CD4-positive, alpha-beta T cell (primary cell): ENCODE measurements at regions of chr3 and their contacts with region 1.

Region 1: DNA sequence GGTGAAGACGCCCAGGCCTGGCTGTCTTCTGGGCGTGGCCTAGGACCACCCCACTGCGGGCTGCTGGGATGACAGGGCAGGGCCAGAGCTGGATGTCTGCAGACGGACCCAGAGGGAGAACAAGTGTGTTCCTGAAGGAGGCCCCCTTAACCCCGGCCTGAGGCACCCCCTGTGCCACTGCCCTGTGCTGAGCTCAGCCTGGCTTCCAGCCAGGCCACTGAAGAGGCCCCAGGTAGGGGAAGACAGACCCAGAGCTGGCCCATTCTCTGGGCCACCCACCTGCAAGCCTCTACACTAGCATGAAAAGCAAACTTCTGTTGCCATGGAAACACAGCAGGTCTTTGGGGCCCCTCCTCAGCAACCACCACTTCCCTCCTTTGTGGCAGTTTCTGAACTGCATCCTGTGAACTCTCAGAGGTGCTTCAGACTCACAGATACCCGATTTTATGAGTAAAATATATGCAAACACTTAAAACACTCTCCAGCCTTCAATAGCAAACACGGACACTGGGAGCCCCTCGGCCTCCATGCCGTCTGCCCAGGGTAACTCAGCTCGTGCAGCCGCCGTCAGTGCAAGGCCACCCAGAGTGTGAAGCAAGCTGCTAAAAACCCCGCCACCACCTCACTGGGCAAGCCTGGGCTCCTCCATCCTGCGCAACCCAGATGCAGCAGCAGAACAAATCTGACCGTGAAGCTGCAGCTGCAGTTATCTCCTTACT is 42.5 kb downstream of the CMTM6 start:
- DNase-seq: peak; percentile 58 to 97 (median 73)
- ATAC-seq: peak; percentile 73
- H3K4me3 ChIP-seq: peak overlapping the region; percentile 39
- H3K4me3 Mint-ChIP-seq: peak overlapping the region; percentile 76
- H3K27ac ChIP-seq: peak overlapping the region; percentile 90 to 97
- H3K27ac Mint-ChIP-seq: no peak overlapping the region
- H3K4me1 ChIP-seq: peaks cover 83% of the 10 kb centered on the region
- H3K4me1 Mint-ChIP-seq: peaks cover 33% of the 10 kb centered on the region
- H3K27me3 ChIP-seq: no peaks in the 10 kb centered on the region
- H3K27me3 Mint-ChIP-seq: no peaks in the 10 kb centered on the region
- CTCF ChIP-seq: no peak

Region 2: DNA sequence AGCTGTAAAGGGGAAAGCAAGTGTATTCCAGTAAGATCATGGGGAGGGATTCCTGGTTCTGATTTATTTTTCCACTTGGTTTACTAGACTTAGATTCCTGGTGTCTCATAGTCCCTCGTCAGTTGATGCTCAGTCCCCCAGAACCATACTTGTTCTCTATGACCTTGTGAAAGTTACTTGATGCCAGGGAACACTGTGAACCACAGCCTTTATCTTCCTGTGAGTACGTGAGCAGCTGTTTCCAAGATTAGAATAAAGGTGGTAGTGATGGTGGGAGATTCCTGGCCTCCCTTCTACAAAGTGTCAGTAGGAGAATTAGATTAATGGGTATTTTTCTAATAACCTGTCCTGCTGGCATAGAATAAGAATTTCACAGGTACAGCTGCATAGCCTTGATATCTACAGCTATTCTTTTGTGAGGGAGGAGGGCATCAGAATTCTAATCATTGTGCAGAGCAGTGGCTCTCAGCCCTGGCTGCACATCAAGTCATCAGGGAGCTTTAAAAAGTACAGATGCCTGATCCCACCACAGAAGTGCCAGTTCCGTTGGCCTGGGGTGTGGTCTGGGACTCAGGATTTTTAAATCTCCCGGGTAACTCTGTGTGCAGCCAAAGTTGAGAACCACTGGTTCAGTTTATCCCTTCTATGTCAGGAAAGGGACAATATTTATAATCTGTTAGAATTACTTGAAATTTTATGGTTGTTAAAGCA is 333.7 kb before region 1 on chr3:
- CTCF ChIA-PET with region 1: no interaction called
- POLR2A ChIA-PET with region 1: no interaction called
- intact Hi-C with region 1: no loop called
- DNase-seq: no peak
- ATAC-seq: no peak
- H3K4me3 ChIP-seq: no peak overlapping the region
- H3K4me3 Mint-ChIP-seq: no peak overlapping the region
- H3K27ac ChIP-seq: no peak overlapping the region
- H3K27ac Mint-ChIP-seq: no peak overlapping the region
- H3K4me1 ChIP-seq: no peaks in the 10 kb centered on the region
- H3K4me1 Mint-ChIP-seq: peaks cover 21% of the 10 kb centered on the region
- H3K27me3 ChIP-seq: no peaks in the 10 kb centered on the region
- H3K27me3 Mint-ChIP-seq: no peaks in the 10 kb centered on the region
- CTCF ChIP-seq: no peak

Region 3: DNA sequence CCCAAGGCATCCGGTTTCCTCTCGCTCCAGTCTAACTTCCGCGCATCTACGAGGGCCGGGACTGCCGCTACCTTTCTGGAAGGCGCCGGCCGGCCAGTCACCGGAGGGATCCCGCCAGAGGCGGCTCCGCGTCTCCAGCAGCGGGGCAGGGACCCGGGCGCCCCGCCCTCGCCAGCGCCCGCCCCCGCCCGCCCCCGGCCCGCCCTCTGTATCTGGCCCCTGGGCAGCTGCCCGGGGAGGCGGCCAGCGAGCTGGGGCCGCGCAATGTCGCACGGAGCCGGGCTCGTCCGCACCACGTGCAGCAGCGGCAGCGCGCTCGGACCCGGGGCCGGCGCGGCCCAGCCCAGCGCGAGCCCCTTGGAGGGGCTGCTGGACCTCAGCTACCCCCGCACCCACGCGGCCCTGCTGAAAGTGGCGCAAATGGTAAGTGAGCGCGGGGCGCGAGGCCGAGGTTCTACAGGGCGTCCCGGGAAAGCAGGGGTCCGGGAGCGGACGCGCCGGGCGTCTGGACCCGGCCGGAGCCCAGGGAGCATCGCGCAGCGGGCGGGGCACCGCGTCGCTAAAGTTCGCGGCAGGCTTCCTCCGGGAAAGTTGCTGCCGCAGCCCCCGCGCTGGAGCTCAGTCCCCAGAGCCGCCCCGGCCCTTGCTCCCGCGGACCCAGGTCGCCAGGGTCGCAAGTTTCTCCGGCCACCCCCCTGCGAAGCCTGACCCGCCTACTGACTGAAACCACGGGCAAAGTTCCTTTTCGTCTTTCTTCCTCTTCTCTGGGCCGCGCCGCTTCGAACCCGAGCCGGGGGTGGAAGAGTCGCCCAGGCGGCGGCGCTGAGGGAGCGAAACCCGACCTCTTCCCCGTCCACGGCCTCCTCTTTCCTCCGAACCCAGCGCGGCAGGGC is 68.3 kb before region 1 on chr3 and contains the start of gene CMTM7:
- CTCF ChIA-PET with region 1: no interaction called
- POLR2A ChIA-PET with region 1: interaction called, 16 read pairs
- intact Hi-C with region 1: loop called in 1 of 2 experiments (anchors 2 kb)
- DNase-seq: peak; percentile 32 to 81 (median 52)
- ATAC-seq: peak; percentile 54
- H3K4me3 ChIP-seq: peak within 1 kb of the TSS; percentile 92
- H3K4me3 Mint-ChIP-seq: peak within 1 kb of the TSS; percentile 97
- H3K27ac ChIP-seq: peak within 1 kb of the TSS; percentile 77 to 79
- H3K27ac Mint-ChIP-seq: peak within 1 kb of the TSS; percentile 91
- H3K4me1 ChIP-seq: peaks cover 47% of the 10 kb centered on the region
- H3K4me1 Mint-ChIP-seq: peaks cover 61% of the 10 kb centered on the region
- H3K27me3 ChIP-seq: no peaks in the 10 kb centered on the region
- H3K27me3 Mint-ChIP-seq: no peaks in the 10 kb centered on the region
- CTCF ChIP-seq: no peak
- total RNA-seq, gene CMTM7: 31.5 to 35.2 TPM

Region 4: GRCh38 chr3:32420126-32421038 is 39.8 kb before region 1 on chr3:
- CTCF ChIA-PET with region 1: interaction called, 5 read pairs
- POLR2A ChIA-PET with region 1: interaction called, 17 read pairs
- intact Hi-C with region 1: loop called in 1 of 2 experiments (anchors 5 kb)
- DNase-seq: peak in 4 of 14 experiments; percentile 39 to 55 (median 44)
- ATAC-seq: peak; percentile 35
- H3K4me3 ChIP-seq: no peak overlapping the region
- H3K4me3 Mint-ChIP-seq: peak overlapping the region; percentile 71
- H3K27ac ChIP-seq: peak overlapping the region; percentile 44 to 48
- H3K27ac Mint-ChIP-seq: peak overlapping the region; percentile 95
- H3K4me1 ChIP-seq: peaks cover 69% of the 10 kb centered on the region
- H3K4me1 Mint-ChIP-seq: peaks cover 99% of the 10 kb centered on the region
- H3K27me3 ChIP-seq: no peaks in the 10 kb centered on the region
- H3K27me3 Mint-ChIP-seq: no peaks in the 10 kb centered on the region
- CTCF ChIP-seq: no peak

Region 5: GRCh38 chr3:32438596-32439344 is 21.4 kb before region 1 on chr3:
- CTCF ChIA-PET with region 1: interaction called, 6 read pairs
- POLR2A ChIA-PET with region 1: interaction called, 50 read pairs
- intact Hi-C with region 1: loop called (anchors 2 kb)
- DNase-seq: peak in 2 of 14 experiments; percentile 35 to 40
- ATAC-seq: peak; percentile 50
- H3K4me3 ChIP-seq: no peak overlapping the region
- H3K4me3 Mint-ChIP-seq: peak overlapping the region; percentile 65
- H3K27ac ChIP-seq: peak overlapping the region in 1 of 2 donors; percentile 32
- H3K27ac Mint-ChIP-seq: peak overlapping the region; percentile 95
- H3K4me1 ChIP-seq: peaks cover 58% of the 10 kb centered on the region
- H3K4me1 Mint-ChIP-seq: peaks cover 72% of the 10 kb centered on the region
- H3K27me3 ChIP-seq: no peaks in the 10 kb centered on the region
- H3K27me3 Mint-ChIP-seq: no peaks in the 10 kb centered on the region
- CTCF ChIP-seq: no peak